A549 (cell line): ENCODE measurements at regions of chr1 and their contacts with region 1.

Region 1: DNA sequence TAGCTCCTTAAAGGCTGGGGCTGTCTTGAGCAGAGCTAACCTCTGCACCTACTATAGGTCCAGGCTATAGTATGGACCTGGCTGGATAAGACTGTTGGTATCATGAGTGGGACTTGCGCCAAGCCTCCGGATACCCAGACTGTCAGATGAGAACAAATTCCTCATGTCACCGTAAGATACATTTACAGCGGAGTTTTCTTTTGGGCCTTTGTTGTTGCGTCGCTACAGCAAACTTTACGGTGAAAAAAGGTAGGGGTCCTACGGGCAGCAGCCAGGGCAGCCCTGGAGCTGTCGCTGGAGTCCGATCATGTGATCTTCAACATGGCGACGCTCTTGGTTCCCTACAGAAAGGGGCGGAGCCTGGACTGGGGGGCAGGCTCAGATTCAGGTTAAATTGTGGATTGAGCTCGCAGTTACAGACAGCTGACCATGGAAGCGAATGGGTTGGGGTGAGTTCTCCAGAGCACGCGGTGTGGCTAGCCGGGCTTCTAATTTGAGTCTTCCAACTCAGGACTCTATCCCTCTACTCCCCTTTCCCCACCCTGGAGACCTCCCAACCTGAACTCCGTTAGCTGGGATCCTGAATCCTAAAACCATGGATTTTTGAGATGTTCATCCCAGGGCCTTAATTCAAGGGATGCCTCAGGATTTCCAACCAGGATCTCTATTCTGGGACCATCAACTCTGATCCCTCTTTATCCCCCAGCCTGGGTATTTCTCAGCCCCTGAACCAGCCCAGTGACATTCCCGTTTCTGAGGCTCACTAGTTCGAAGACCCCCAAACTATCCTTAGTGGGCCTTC is at the start of gene UROD:
- DNase-seq: peak; percentile 92 to 94
- ATAC-seq: peak; percentile 60 to 85
- H3K4me3 ChIP-seq: peak within 1 kb of the TSS; percentile 97
- H3K27ac ChIP-seq: peak within 1 kb of the TSS; percentile 67 to 93
- H3K4me1 ChIP-seq: peaks cover 8% of the 10 kb centered on the region; the same call in 2 of the 3 replicates
- CTCF ChIP-seq: no peak
- EP300 ChIP-seq: no peak
- POLR2A ChIP-seq: peak; percentile 42
- RAD21 ChIP-seq: no peak
- polyA plus RNA-seq, gene UROD: 59.0 and 74.5 TPM in 2 replicates

Region 2: GRCh38 chr1:44835738-44836675 is 176.0 kb before region 1 on chr1:
- CTCF ChIA-PET with region 1: interaction called, 11 read pairs
- POLR2A ChIA-PET with region 1: no interaction called
- DNase-seq: peak; percentile 42 to 76
- ATAC-seq: peak; percentile 89 to 94
- H3K4me3 ChIP-seq: no peak overlapping the region
- H3K27ac ChIP-seq: no peak overlapping the region
- H3K4me1 ChIP-seq: no peaks in the 10 kb centered on the region
- CTCF ChIP-seq: peak; percentile 63
- EP300 ChIP-seq: no peak
- POLR2A ChIP-seq: no peak
- RAD21 ChIP-seq: peak; percentile 70 to 75

Region 3: DNA sequence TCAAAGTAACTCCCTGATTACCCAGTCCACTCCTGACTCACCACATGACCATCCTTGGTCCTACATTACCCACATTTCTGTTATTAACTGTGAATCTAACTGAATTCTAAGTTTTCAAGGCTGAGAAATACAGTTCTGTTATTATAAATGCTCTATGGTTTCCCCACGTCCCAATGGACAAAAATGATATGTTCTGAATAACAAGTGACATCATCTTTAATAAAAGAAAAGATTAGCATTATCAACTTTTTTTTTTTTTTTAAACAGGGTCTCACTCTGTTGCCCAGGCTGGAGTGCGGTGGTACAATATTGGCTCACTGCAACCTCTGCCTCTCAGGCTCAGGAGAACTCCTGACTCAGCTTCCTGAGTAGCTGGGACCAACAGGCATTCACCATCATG is 134.8 kb after region 1 on chr1:
- CTCF ChIA-PET with region 1: no interaction called
- POLR2A ChIA-PET with region 1: no interaction called
- DNase-seq: no peak
- ATAC-seq: no peak
- H3K4me3 ChIP-seq: no peak overlapping the region
- H3K27ac ChIP-seq: no peak overlapping the region
- H3K4me1 ChIP-seq: no peaks in the 10 kb centered on the region
- CTCF ChIP-seq: no peak
- EP300 ChIP-seq: no peak
- POLR2A ChIP-seq: no peak
- RAD21 ChIP-seq: no peak

Region 4: DNA sequence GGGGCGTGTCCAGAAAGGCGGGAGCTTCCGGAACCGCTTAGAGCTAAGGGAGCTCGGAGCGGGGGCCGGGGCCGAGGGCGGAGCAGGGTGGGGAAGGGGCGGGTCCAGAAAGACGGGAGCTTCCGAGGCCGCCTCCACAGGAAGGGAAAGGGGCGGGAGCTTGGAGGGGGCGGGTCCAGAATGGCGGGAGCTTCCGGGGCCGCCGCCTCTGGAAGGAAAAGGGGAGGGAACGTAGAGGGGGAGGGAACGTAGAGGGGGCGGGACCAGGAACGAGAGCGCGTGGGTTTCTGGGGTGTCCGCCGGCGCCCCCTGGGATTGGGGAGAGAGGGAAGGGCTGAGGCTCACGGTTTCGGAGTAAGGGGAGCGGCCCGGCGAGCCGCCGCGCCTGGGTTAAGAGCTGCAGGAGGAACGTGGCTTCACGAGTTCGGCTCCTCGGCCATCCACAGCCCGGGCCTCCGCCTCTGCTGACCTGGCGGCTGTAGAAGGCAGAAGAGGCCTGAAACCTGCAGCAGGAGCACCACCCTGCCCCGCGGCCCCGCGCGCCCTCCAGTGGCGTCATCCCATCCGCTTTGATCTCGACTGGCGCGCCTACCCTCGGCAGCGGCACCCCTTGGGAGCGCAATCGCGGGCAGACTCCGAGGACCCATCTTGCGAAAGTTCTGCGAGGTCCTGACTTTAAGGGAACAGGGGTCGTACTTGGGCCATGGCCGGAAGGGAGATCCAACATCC is 291.7 kb after region 1 on chr1:
- CTCF ChIA-PET with region 1: interaction called, 488 read pairs
- POLR2A ChIA-PET with region 1: interaction called, 57 read pairs
- DNase-seq: peak; percentile 87 to 95
- ATAC-seq: peak; percentile 94 to 95
- H3K4me3 ChIP-seq: peak overlapping the region; percentile 64
- H3K27ac ChIP-seq: peak overlapping the region; percentile 94 to 99
- H3K4me1 ChIP-seq: peaks cover 7% of the 10 kb centered on the region
- CTCF ChIP-seq: peak; percentile 76
- EP300 ChIP-seq: no peak
- POLR2A ChIP-seq: peak; percentile 56
- RAD21 ChIP-seq: peak; percentile 66 to 77

Region 5: GRCh38 chr1:45339789-45340570 is 327.9 kb after region 1 on chr1 and contains the starts of genes MUTYH and TOE1:
- CTCF ChIA-PET with region 1: interaction called, 13 read pairs
- POLR2A ChIA-PET with region 1: interaction called, 19 read pairs
- DNase-seq: peak; percentile 82 to 92
- ATAC-seq: peak; percentile 91 to 94
- H3K4me3 ChIP-seq: peak within 1 kb of the TSS; percentile 67
- H3K27ac ChIP-seq: peak within 1 kb of the TSS; percentile 96 to 97
- H3K4me1 ChIP-seq: peaks cover 18% of the 10 kb centered on the region; the same call in 2 of the 3 replicates
- CTCF ChIP-seq: no peak
- EP300 ChIP-seq: no peak
- POLR2A ChIP-seq: peak; percentile 78
- RAD21 ChIP-seq: no peak
- polyA plus RNA-seq, gene MUTYH: 9.0 and 9.4 TPM in 2 replicates
- polyA plus RNA-seq, gene TOE1: 13.3 and 14.9 TPM in 2 replicates

Region 6: GRCh38 chr1:45499415-45499769 is 487.4 kb after region 1 on chr1:
- CTCF ChIA-PET with region 1: interaction called, 56 read pairs
- POLR2A ChIA-PET with region 1: interaction called, 3 read pairs
- DNase-seq: no peak
- ATAC-seq: peak in 1 of 2 experiments; percentile 16; a peak in 2 of 6 replicates
- H3K4me3 ChIP-seq: peak overlapping the region; percentile 75
- H3K27ac ChIP-seq: peak overlapping the region; percentile 82 to 83
- H3K4me1 ChIP-seq: peaks cover 25% of the 10 kb centered on the region
- CTCF ChIP-seq: no peak
- EP300 ChIP-seq: no peak
- POLR2A ChIP-seq: no peak
- RAD21 ChIP-seq: no peak